Activated T-helper 2 cell treated with anti-CD3 and anti-CD28 coated beads, Interferon-gamma antibody, Interleukin-2, Interleukin-4, amounts not matched to agents 10 μg/mL and 5 μg/mL and 100 μg/mL, durations not matched to agents 14 hours and 24 hours and 36 hours (primary cell): ENCODE measurements at regions of chr13 and their contacts with region 1.

Region 1: DNA sequence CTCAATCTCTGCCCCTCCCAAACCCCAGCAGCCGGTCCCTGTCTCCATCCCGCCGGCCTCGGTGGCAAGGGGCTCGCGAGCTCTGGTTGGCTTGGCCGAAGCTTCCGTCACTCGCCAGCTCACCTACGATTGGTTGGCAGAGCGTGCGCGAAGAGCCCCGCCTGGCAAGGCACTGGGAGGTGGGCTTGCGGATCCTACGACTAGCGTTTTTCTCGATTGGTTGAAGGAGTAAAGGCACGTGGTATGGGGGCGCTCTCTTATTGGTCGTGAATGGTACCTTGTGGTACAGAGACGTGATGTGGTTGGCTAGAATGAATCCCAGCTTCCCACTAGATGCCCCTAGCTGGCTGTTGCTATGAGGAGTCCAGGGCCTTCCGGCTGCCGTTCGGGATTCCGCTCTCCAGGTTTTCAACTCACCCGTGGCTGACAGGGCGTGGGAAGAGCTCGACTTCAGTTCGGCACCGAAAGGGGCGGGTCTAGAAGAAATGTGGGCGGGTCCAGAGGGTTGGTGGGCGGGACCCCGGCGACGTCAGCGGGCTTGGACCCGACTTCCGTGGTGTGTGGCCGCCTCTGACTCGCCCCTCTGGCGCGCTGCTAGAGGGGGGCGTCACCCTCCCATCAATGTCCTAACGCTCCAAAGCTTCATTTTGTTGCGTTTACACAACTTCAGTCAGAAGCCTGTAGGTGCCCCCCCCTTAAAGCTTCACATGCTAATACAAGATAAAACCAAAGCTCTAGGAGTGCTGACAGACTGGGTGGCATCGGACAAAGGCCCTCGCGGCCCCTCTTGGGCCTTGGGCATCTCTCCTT is 847 bp upstream of the RAP2A start:
- DNase-seq: peak; percentile 99
- H3K4me3 Mint-ChIP-seq: peak overlapping the region; percentile 98
- H3K27ac Mint-ChIP-seq: peak overlapping the region; percentile 99
- H3K4me1 Mint-ChIP-seq: peaks cover 34% of the 10 kb centered on the region
- H3K27me3 Mint-ChIP-seq: peaks cover 9% of the 10 kb centered on the region

Region 2: GRCh38 chr13:95676762-95677563 is 1756.2 kb before region 1 on chr13 and contains the start of gene DNAJC3:
- intact Hi-C with region 1: loop called (anchors 2 kb)
- DNase-seq: peak; percentile 98
- H3K4me3 Mint-ChIP-seq: peak within 1 kb of the TSS; percentile 95
- H3K27ac Mint-ChIP-seq: peak within 1 kb of the TSS; percentile 80
- H3K4me1 Mint-ChIP-seq: peaks cover 45% of the 10 kb centered on the region
- H3K27me3 Mint-ChIP-seq: no peaks in the 10 kb centered on the region
- total RNA-seq, gene DNAJC3: 28.1 and 28.6 TPM in 2 replicates

Region 3: DNA sequence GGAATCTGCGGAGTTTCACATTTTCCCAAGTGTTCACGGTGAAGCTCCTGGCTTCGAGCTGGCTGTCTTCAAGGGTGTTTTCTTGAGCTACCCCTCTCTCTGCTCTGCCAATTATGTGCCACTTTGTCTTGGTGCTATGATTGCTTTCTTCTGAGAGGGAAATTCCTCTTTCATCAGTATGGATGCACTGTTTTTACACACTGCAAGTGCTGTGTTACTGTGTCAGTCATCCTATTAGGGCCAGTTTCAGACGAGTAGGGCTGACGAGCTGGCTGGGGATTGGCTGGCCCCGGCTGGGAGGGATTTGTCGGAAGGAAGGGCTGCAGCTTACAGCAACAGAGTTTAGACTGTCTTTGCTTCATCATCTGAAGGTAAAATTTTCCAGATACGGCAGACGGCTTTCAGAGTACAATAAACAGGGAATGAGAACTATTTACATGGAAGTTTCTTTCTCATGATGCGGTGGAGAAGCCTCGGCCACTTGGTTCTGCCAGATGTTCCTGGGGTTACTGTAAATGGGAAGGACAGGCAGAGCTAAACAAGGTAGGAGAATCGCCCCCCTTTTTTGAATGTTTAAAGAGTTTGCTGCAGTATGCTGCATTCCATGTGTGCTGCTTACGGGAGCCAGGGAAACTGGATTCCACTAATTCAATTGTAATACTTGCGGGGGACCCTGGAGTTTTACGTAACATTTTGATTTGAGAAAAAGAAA is 211.0 kb before region 1 on chr13 and contains the start of gene MBNL2:
- intact Hi-C with region 1: loop called (anchors 1 kb)
- DNase-seq: peak; percentile 82
- H3K4me3 Mint-ChIP-seq: peak within 1 kb of the TSS; percentile 91
- H3K27ac Mint-ChIP-seq: peak within 1 kb of the TSS; percentile 87
- H3K4me1 Mint-ChIP-seq: peaks cover 46% of the 10 kb centered on the region
- H3K27me3 Mint-ChIP-seq: no peaks in the 10 kb centered on the region
- total RNA-seq, gene MBNL2: 27.2 and 28.4 TPM in 2 replicates

Region 4: DNA sequence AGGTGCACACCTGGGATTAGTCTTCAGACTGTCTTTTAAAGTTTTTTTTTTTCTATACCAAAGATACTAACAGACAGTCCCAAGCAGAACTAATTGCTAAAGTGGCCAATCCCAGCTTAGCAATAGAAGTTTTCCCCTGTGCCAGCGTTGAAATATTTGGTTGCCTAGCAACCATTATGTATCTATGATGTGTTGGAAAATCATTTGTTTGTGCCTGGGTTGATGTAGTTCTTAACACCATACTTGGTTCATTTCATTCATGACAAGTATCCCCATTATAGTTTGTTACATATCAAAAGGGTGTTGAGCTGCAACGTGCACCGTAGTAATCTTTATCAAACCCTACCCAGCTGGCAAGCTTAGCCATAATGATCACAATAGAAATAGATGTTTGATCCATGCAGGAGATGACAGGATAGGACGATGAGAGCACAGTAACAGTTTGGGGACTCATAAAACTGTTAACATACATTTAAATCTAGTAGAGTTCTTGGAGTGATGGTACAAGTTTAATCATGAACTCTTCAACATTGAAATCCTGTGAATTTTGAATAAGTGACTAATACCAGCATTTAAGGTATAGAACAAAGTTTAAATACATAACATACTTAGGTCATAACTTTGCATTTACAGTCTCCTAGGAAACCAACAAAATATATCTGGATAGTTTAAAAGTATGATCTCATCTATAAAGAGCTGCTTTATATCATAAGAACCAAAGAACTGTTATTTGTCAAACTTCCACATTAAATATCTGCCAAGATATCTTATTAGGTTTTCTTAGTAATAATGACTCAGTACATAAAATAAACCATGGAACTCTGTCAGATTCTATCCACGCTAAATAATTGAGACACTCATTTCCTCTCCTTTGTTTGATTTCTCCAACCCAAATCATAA is 137.6 kb before region 1 on chr13:
- intact Hi-C with region 1: loop called (anchors 1 kb)
- DNase-seq: no peak
- H3K4me3 Mint-ChIP-seq: no peak overlapping the region
- H3K27ac Mint-ChIP-seq: no peak overlapping the region
- H3K4me1 Mint-ChIP-seq: peaks cover 22% of the 10 kb centered on the region
- H3K27me3 Mint-ChIP-seq: no peaks in the 10 kb centered on the region

Region 5: GRCh38 chr13:97539651-97540610 is 106.8 kb after region 1 on chr13:
- intact Hi-C with region 1: loop called (anchors 5 kb)
- DNase-seq: no peak
- H3K4me3 Mint-ChIP-seq: no peak overlapping the region
- H3K27ac Mint-ChIP-seq: no peak overlapping the region
- H3K4me1 Mint-ChIP-seq: peaks cover 4% of the 10 kb centered on the region
- H3K27me3 Mint-ChIP-seq: no peaks in the 10 kb centered on the region

Region 6: GRCh38 chr13:97615266-97615665 is 182.1 kb after region 1 on chr13:
- intact Hi-C with region 1: no loop called
- DNase-seq: no peak
- H3K4me3 Mint-ChIP-seq: no peak overlapping the region
- H3K27ac Mint-ChIP-seq: no peak overlapping the region
- H3K4me1 Mint-ChIP-seq: no peaks in the 10 kb centered on the region
- H3K27me3 Mint-ChIP-seq: no peaks in the 10 kb centered on the region

Region 7: DNA sequence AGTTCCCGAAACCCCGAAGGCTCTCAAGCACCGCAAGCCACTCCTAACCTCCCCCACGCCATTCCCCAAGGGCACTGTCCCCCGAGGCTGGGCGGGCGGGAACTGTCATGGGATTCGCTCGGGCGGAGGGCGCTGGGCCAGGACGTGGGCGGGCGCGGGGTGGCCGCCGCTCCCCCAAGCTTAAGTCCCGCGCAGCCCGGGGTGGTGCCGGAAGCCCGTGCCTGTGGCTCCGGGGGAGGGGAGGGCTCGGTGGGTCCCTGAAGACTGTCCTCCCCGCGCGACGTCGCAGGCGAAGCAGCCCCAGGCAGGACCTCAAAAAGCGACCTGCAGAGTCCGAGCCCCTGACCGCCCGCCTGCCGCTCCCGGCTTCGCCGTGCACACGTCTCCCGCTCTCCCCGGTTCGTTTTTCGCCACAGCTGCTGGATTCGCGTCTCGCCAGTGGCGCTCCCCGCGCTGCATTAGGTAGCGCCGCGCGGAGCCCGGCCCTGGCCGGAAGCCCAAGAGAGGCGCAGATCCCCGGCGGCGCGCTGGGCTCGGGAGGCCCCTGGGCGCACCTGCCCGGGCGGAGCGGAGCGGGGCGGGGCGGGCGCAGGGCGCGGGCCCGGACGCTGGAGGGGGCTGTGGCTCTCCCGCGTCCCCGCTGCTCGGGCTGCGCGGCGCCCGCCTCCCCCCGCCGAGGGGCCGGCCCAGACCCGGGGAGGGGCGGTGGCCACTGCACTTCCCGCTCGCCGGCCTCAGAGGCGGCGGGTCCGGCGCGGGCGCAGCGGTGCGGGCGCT is 709.4 kb after region 1 on chr13 and contains the start of gene FARP1:
- intact Hi-C with region 1: loop called (anchors 10 kb)
- DNase-seq: peak; percentile 36
- H3K4me3 Mint-ChIP-seq: peak within 1 kb of the TSS; percentile 70
- H3K27ac Mint-ChIP-seq: no peak within 1 kb of the TSS
- H3K4me1 Mint-ChIP-seq: peaks cover 4% of the 10 kb centered on the region
- H3K27me3 Mint-ChIP-seq: peaks cover 61% of the 10 kb centered on the region
- total RNA-seq, gene FARP1: 0.55 and 0.89 TPM in 2 replicates